ENCODE measurements at regions of chr12 and their contacts with region 1.

Region 1: DNA sequence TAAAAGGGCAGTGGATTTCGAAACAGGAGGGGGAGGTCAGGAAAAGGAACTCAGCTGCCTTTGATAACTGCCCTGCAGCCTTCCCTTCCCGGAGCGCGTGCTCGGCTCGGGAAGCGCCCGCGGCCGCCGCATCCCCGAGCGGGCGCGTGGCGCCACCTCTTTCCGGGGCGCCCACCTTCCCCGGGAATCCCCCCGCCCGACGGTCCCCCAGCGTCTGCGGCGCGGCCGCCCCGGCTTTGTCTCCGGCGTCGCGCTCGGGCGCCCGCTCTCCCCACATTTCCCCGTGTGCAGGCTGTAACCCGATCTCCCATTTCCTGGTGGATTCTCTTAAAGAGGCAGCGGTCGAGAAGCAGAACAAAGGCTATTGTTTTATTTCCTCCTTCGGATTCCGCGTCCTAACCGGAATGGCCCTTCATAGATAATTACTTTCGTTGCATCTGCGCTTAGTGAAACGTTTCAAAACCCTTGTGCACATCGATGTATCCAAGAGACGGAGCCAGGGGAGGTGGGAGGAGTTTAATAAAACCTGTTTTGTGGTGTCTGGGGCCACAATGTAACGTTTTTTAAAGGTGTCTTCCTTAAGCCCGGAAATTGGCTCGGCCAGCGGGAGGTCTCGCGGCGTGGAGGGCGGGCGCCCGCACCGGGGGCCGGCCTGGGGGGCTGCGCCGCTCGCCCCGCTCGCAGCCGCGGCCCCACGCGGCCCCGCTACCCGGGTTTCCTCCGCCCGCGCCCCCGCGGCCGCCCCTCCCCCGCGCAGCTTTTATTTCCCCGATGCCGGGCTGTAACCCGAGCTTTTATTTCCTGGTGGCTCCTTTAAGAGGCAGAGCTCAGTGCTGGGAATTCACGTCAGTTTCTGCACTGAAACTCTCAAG is at the start of gene ETV6:
- DNase-seq: peak; percentile 73
- H3K4me3 Mint-ChIP-seq: peak within 1 kb of the TSS; percentile 94
- H3K27ac Mint-ChIP-seq: peak within 1 kb of the TSS; percentile 99
- H3K4me1 Mint-ChIP-seq: peaks cover 28% of the 10 kb centered on the region
- H3K27me3 Mint-ChIP-seq: peaks cover 2% of the 10 kb centered on the region
- total RNA-seq, gene ETV6: 68.2 and 69.4 TPM in 2 replicates

Region 2: DNA sequence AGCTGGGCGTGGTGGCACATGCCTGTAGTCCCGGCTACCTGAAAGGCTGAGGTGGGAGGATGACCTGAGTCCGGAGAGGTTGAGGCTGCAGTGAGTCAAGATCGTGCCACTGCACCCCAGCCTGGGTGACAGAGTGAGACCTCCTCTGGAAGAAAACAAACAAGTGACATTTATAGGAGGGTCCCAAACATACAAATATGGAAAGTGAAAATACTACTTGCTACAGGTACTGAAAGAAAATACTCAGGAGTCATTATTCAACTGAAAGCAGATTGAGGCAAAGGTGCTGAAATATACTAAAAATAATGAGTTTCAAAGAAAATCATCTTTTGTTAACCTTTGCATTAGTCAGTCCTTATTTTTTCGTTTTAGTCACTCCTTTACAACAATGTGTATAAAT is 53.9 kb after region 1 on chr12:
- intact Hi-C with region 1: loop called (anchors 5 kb)
- DNase-seq: no peak
- H3K4me3 Mint-ChIP-seq: no peak overlapping the region
- H3K27ac Mint-ChIP-seq: peak overlapping the region; percentile 42
- H3K4me1 Mint-ChIP-seq: peaks cover 29% of the 10 kb centered on the region
- H3K27me3 Mint-ChIP-seq: no peaks in the 10 kb centered on the region

Region 3: DNA sequence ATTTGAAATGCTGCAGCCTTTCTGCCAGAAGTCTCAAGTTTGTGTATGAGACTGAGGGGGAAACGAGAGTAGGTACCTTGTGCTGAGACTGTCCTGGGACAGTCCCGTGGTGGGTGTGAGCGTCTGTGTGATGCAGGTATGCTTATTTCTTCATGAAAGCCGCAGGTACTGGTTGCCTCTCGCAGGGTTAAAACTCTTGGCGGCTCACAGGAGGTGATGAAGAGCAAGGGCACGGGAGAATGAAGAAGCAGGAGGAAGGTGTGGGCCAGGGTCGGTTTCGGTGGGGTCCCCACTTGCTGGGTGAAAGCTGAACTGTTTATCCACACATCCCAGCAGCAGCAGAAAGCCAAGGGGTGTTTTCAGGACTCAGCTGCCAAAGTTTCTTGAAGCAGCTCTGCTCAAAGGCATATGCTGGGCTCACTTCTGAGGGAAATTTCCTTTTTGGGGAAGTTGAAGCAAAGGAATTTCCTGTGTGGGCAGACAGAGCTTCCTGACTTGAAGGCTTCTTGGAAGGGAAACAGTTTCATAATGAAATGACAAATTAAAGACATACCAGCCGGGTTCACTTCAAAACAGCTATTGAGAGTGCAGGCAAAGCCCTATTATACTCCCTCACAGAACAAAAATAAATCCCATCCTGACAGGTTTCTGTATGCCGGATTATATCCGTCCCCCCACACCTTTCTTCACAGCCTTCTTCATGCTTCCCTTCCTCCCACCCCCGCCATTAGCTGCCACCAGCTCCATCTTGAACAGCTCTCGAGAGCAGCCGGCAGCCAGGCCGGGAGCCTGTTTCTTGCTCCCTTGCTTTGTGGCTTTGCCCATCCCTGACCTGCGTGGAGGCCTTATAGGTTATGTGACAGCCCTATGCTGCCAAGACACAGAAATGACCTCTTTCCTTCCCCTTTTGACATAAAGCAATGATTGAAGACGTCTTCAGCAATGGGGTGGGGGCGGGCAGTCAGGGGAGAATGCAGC is 117.0 kb after region 1 on chr12:
- intact Hi-C with region 1: loop called (anchors 2 kb)
- DNase-seq: no peak
- H3K4me3 Mint-ChIP-seq: peak overlapping the region; percentile 63
- H3K27ac Mint-ChIP-seq: peak overlapping the region; percentile 87
- H3K4me1 Mint-ChIP-seq: peaks cover 77% of the 10 kb centered on the region
- H3K27me3 Mint-ChIP-seq: no peaks in the 10 kb centered on the region

Region 4: DNA sequence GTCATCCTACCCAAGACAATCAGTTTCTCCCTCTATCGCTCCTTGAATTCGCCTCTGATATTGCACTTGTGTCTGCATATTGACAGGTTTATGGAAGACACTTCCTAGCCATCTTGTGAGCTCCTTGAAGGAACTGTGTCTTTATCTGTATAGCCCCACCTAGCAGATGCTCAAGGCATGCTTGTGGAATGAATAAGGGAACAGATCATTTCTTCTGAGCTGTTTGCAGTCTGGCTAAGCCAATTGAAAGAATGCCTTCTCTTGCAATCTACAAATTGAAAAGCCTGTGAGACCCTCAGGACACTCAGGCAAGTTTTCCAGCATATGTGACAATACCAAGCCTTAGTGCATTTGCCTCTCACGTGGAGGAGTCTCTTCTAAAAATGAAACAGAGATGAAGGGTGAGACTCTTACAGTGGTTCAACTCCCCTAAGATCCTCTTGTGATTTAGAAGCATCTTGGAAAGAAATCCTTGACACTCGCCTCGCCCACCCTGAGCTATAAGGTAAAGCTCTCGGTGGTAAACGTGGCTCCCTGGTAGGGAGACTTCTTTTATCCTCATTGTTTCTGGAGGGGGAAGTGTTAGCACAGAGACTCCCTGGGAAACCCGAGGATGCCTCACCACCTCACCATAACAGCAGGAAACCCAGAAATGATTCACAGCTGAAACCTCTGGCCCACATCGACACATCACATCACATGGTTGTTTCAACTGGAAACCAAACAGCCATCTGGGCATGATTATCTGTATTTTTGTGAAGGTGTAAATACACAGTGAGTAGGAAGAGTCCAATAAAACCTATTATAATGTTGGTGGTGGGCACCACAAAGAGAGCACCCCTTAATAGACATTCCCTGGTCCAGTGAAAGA is 309.4 kb after region 1 on chr12:
- intact Hi-C with region 1: loop called (anchors 2 kb)
- DNase-seq: peak; percentile 43
- H3K4me3 Mint-ChIP-seq: peak overlapping the region; percentile 13
- H3K27ac Mint-ChIP-seq: peak overlapping the region; percentile 93
- H3K4me1 Mint-ChIP-seq: peaks cover 51% of the 10 kb centered on the region
- H3K27me3 Mint-ChIP-seq: peaks cover 10% of the 10 kb centered on the region

Region 5: DNA sequence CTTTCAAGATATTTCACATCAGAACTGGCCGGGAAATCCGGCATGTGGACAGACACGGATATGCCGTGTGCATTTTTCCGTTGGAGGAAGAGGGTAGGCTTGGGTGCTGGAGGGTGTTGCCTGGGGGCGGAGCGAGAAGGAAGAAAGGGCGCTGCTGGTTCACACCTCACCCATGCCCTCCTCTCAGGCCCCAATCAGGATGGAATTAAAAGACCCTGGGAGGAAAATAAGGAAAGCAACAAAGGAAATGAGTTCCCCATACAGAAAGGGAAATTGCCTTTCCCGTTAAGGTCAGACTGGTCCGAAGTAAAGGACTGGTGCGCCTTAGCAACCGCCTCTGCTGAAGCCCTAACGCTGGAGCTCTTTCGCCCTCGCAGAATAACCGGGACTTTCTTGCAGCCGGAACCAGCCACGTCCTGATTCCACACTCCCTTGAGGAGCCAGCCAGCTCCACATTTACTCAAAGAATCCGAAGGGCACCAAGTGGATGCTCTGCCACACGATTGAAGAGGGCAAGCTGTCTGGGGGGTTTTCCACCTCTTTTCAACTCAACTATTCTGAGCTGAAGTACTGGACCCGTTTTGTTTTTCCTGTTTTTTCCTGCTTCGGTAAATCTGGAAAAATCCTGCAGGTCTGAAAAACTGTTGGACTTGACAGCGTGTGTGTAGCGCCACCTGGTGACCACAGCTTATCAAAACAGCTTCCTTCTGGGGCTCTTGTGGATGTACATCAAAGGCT is 384.0 kb after region 1 on chr12:
- intact Hi-C with region 1: loop called (anchors 1 kb)
- DNase-seq: peak; percentile 49
- H3K4me3 Mint-ChIP-seq: peak overlapping the region; percentile 65
- H3K27ac Mint-ChIP-seq: peak overlapping the region; percentile 79
- H3K4me1 Mint-ChIP-seq: peaks cover 31% of the 10 kb centered on the region
- H3K27me3 Mint-ChIP-seq: peaks cover 8% of the 10 kb centered on the region

Region 6: DNA sequence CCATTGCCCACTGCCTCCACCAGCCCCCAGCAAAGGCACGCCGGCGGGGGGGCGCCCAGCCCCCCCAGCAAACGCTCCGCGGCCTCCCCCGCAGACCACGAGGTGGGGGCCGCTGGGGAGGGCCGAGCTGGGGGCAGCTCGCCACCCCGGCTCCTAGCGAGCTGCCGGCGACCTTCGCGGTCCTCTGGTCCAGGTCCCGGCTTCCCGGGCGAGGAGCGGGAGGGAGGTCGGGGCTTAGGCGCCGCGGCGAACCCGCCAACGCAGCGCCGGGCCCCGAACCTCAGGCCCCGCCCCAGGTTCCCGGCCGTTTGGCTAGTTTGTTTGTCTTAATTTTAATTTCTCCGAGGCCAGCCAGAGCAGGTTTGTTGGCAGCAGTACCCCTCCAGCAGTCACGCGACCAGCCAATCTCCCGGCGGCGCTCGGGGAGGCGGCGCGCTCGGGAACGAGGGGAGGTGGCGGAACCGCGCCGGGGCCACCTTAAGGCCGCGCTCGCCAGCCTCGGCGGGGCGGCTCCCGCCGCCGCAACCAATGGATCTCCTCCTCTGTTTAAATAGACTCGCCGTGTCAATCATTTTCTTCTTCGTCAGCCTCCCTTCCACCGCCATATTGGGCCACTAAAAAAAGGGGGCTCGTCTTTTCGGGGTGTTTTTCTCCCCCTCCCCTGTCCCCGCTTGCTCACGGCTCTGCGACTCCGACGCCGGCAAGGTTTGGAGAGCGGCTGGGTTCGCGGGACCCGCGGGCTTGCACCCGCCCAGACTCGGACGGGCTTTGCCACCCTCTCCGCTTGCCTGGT is 1067.9 kb after region 1 on chr12 and contains the start of gene CDKN1B:
- intact Hi-C with region 1: loop called (anchors 5 kb)
- DNase-seq: peak; percentile 80
- H3K4me3 Mint-ChIP-seq: peak within 1 kb of the TSS; percentile 99
- H3K27ac Mint-ChIP-seq: peak within 1 kb of the TSS; percentile 98
- H3K4me1 Mint-ChIP-seq: peaks cover 52% of the 10 kb centered on the region
- H3K27me3 Mint-ChIP-seq: no peaks in the 10 kb centered on the region
- total RNA-seq, gene CDKN1B: 49.0 and 53.4 TPM in 2 replicates

Measured in activated T-helper 2 cell treated with anti-CD3 and anti-CD28 coated beads, Interferon-gamma antibody, Interleukin-2, Interleukin-4, amounts not matched to agents 10 μg/mL and 5 μg/mL and 100 μg/mL, durations not matched to agents 14 hours and 24 hours and 36 hours (primary cell).